ENCODE measurements at regions of chr12 and their contacts with region 1.

Region 1: GRCh38 chr12:93098077-93098476 is 169.0 kb upstream of the EEA1 start:
- DNase-seq: peak; percentile 50 to 66 (median 54)
- H3K4me3 ChIP-seq: no peak overlapping the region
- H3K4me3 Mint-ChIP-seq: peak overlapping the region in 2 of 8 donors; percentile 12 to 46
- H3K27ac ChIP-seq: no peak overlapping the region
- H3K27ac Mint-ChIP-seq: peak overlapping the region in 1 of 7 donors; percentile 2
- H3K4me1 ChIP-seq: no peaks in the 10 kb centered on the region
- H3K4me1 Mint-ChIP-seq: peaks cover 6 to 10% (median 6%) of the 10 kb centered on the region in 4 donors
- H3K27me3 ChIP-seq: no peaks in the 10 kb centered on the region
- H3K27me3 Mint-ChIP-seq: no peaks in the 10 kb centered on the region

Region 2: GRCh38 chr12:92784795-92785562 is 313.1 kb before region 1 on chr12:
- CTCF ChIA-PET with region 1: interaction called, 3 read pairs
- POLR2A ChIA-PET with region 1: no interaction called
- intact Hi-C with region 1: loop called (anchors 1 kb)
- DNase-seq: peak; percentile 54 to 73 (median 67)
- H3K4me3 ChIP-seq: no peak overlapping the region
- H3K4me3 Mint-ChIP-seq: no peak overlapping the region
- H3K27ac ChIP-seq: no peak overlapping the region
- H3K27ac Mint-ChIP-seq: peak overlapping the region in 1 of 7 donors; percentile 4
- H3K4me1 ChIP-seq: no peaks in the 10 kb centered on the region
- H3K4me1 Mint-ChIP-seq: peaks cover 0 to 4% (median 2%) of the 10 kb centered on the region in 4 donors
- H3K27me3 ChIP-seq: no peaks in the 10 kb centered on the region
- H3K27me3 Mint-ChIP-seq: no peaks in the 10 kb centered on the region

Region 3: DNA sequence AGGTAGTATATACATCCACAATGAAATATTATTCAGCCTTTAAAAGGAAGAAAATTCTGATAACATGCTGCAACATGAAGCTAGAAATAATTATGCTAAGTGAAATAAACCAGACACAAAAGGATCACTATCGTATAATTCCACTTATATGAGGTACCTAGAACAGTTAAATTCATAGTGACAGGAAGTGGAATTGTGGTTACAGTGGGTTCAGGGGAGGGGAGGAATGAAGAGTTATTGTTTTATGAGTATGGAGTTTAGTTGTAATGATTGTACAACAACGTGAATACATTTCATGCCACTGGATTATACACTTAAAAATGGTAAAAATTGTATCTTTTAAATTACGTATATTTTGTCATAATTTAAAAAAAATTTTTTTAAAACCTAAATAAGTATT is 190.0 kb before region 1 on chr12:
- CTCF ChIA-PET with region 1: no interaction called
- POLR2A ChIA-PET with region 1: no interaction called
- intact Hi-C with region 1: no loop called
- DNase-seq: peak; percentile 43 to 66 (median 46)
- H3K4me3 ChIP-seq: peak overlapping the region in 1 of 2 donors; percentile 2
- H3K4me3 Mint-ChIP-seq: peak overlapping the region in 6 of 8 donors; percentile 6 to 71 (median 50)
- H3K27ac ChIP-seq: no peak overlapping the region
- H3K27ac Mint-ChIP-seq: no peak overlapping the region
- H3K4me1 ChIP-seq: peaks cover 34% of the 10 kb centered on the region
- H3K4me1 Mint-ChIP-seq: peaks cover 33 to 55% (median 36%) of the 10 kb centered on the region in 4 donors
- H3K27me3 ChIP-seq: no peaks in the 10 kb centered on the region
- H3K27me3 Mint-ChIP-seq: no peaks in the 10 kb centered on the region

Region 4: GRCh38 chr12:93115198-93115601 is 17.1 kb after region 1 on chr12:
- CTCF ChIA-PET with region 1: interaction called, 20 read pairs
- POLR2A ChIA-PET with region 1: no interaction called
- intact Hi-C with region 1: no loop called
- DNase-seq: no peak
- H3K4me3 ChIP-seq: no peak overlapping the region
- H3K4me3 Mint-ChIP-seq: no peak overlapping the region
- H3K27ac ChIP-seq: no peak overlapping the region
- H3K27ac Mint-ChIP-seq: no peak overlapping the region
- H3K4me1 ChIP-seq: no peaks in the 10 kb centered on the region
- H3K4me1 Mint-ChIP-seq: no peaks in the 10 kb centered on the region
- H3K27me3 ChIP-seq: no peaks in the 10 kb centered on the region
- H3K27me3 Mint-ChIP-seq: peaks cover 3 to 5% of the 10 kb centered on the region in 2 donors

Region 5: GRCh38 chr12:93378373-93379325 is 280.6 kb after region 1 on chr12:
- CTCF ChIA-PET with region 1: interaction called, 19 read pairs
- POLR2A ChIA-PET with region 1: no interaction called
- intact Hi-C with region 1: loop called (anchors 5 kb)
- DNase-seq: peak; percentile 63 to 73 (median 69)
- H3K4me3 ChIP-seq: peak overlapping the region; percentile 71 to 88
- H3K4me3 Mint-ChIP-seq: peak overlapping the region; percentile 98 to 100 (median 99)
- H3K27ac ChIP-seq: peak overlapping the region; percentile 84
- H3K27ac Mint-ChIP-seq: peak overlapping the region; percentile 96 to 100 (median 99)
- H3K4me1 ChIP-seq: peaks cover 43% of the 10 kb centered on the region
- H3K4me1 Mint-ChIP-seq: peaks cover 28 to 57% (median 43%) of the 10 kb centered on the region in 4 donors
- H3K27me3 ChIP-seq: no peaks in the 10 kb centered on the region
- H3K27me3 Mint-ChIP-seq: no peaks in the 10 kb centered on the region

Region 6: DNA sequence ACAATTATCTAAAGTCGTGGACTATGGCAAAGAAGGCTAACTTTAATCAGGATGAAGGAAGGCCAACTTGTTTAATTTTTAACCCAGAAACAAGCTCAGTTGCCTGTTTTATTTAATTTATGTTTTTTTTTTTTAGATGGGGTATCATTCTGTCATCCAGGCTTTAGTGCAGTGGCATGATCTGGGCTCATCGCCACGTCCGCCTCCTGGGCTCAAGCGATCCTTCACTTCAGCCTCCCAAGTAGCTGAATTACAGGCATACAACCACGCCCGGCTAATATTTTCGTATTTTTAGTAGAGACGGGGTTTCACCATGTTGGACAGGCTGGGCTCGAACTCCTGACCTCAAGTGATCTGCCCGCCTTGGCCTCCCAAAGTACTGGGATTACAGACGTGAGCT is 299.3 kb after region 1 on chr12:
- CTCF ChIA-PET with region 1: interaction called, 39 read pairs
- POLR2A ChIA-PET with region 1: no interaction called
- intact Hi-C with region 1: loop called (anchors 1 kb)
- DNase-seq: no peak
- H3K4me3 ChIP-seq: no peak overlapping the region
- H3K4me3 Mint-ChIP-seq: no peak overlapping the region
- H3K27ac ChIP-seq: no peak overlapping the region
- H3K27ac Mint-ChIP-seq: no peak overlapping the region
- H3K4me1 ChIP-seq: no peaks in the 10 kb centered on the region
- H3K4me1 Mint-ChIP-seq: peaks cover 0 to 7% (median 0%) of the 10 kb centered on the region in 4 donors
- H3K27me3 ChIP-seq: no peaks in the 10 kb centered on the region
- H3K27me3 Mint-ChIP-seq: no peaks in the 10 kb centered on the region

Region 7: DNA sequence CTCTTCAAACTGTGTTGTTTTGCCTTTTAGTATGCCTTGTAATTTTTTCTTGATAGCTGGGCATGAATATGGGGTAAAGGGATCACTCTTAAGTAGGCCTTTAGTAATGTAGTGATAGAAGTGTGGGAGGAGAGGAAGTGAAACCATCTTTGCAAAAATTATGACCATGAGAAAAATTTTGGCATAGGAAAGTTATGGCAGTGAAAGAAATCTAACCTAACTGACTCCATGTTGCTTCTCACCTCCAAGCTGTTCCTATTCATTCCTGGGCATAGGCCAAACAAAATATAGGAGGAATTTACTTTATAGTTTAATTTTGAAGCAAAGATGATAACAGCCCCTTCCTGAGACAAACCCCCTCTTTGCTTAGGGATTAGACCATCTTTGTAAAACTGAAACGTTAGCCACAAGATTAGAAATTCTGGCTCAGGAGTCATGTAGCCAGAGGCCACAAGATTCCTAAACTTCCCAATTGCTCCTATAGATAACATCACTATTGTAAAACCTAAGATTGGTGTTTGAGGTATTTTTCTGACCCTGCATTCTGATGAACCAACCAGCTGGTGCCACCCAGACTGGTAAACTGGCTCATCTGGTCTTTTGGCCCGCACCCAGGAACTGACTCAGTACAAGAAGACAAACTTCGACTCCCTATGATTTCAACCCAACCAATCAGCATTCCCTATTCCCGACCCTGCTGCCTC is 624.9 kb after region 1 on chr12:
- CTCF ChIA-PET with region 1: no interaction called
- POLR2A ChIA-PET with region 1: no interaction called
- intact Hi-C with region 1: no loop called
- DNase-seq: no peak
- H3K4me3 ChIP-seq: no peak overlapping the region
- H3K4me3 Mint-ChIP-seq: peak overlapping the region in 1 of 8 donors; percentile 60
- H3K27ac ChIP-seq: no peak overlapping the region
- H3K27ac Mint-ChIP-seq: no peak overlapping the region
- H3K4me1 ChIP-seq: no peaks in the 10 kb centered on the region
- H3K4me1 Mint-ChIP-seq: peaks cover 0 to 3% (median 0%) of the 10 kb centered on the region in 4 donors
- H3K27me3 ChIP-seq: no peaks in the 10 kb centered on the region
- H3K27me3 Mint-ChIP-seq: no peaks in the 10 kb centered on the region